ENCODE measurements at regions of chr18 and their contacts with region 1.

Region 1: DNA sequence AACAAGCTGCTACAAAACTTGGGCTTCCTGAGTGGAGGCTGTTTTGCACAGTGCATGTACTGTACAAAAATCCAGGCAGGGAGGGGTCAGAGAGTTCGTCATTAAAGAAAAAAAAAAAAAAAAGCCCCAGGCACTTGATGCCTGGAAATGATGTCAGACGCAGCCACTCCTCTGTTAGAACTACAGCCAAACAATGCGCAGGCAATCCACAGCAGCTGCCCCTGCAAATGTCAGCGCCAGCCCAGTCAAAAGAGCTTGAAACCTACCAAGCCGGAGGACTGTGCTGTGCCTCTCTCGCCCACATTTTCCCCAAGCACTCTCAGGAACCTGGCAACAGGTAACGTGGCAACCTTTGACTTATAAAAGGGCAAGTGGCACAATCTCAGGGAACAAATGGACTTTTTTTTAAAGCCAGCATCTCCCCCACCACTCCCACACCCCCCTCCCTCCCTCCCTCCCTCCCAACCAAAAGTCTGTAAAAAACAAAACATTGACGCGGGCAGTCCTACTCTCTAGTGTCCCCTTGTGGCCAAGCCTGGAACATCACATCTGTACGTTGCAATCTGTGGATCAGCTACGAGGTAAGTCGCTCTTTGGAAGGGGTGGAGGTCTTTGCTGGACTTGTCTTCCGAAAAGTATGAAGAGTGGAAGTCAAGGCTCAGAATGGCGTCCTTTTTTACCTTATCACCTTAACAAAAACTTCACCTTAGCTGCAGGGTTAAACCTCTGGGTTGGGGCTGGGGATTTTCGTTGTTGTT is 144.1 kb downstream of the TGIF1 start:
- DNase-seq: peak; percentile 67 to 97 (median 90)
- ATAC-seq: peak; percentile 86 to 87
- H3K4me3 Mint-ChIP-seq: peak overlapping the region; percentile 87 to 96 (median 92)
- H3K27ac Mint-ChIP-seq: peak overlapping the region; percentile 97 to 100 (median 100)
- H3K4me1 Mint-ChIP-seq: peaks cover 22 to 65% (median 53%) of the 10 kb centered on the region in 4 donors
- H3K27me3 Mint-ChIP-seq: no peaks in the 10 kb centered on the region

Region 2: GRCh38 chr18:3261371-3262246 is 332.5 kb before region 1 on chr18 and contains the start of gene MYL12B:
- POLR2A ChIA-PET with region 1: interaction called, 18 read pairs
- DNase-seq: peak; percentile 64 to 94 (median 77)
- ATAC-seq: peak; percentile 73 to 76
- H3K4me3 Mint-ChIP-seq: peak within 1 kb of the TSS; percentile 91 to 100 (median 98)
- H3K27ac Mint-ChIP-seq: peak within 1 kb of the TSS; percentile 97 to 100 (median 99)
- H3K4me1 Mint-ChIP-seq: peaks cover 40 to 89% (median 84%) of the 10 kb centered on the region in 4 donors
- H3K27me3 Mint-ChIP-seq: no peaks in the 10 kb centered on the region
- polyA plus RNA-seq, gene MYL12B: 828 to 956 (median 830) TPM

Region 3: GRCh38 chr18:3297025-3297984 is 296.8 kb before region 1 on chr18:
- POLR2A ChIA-PET with region 1: interaction called, 16 read pairs
- DNase-seq: peak; percentile 80 to 95 (median 90)
- ATAC-seq: peak; percentile 96 to 98
- H3K4me3 Mint-ChIP-seq: peak overlapping the region; percentile 92 to 98 (median 95)
- H3K27ac Mint-ChIP-seq: peak overlapping the region; percentile 82 to 95 (median 87)
- H3K4me1 Mint-ChIP-seq: peaks cover 4 to 17% (median 10%) of the 10 kb centered on the region in 4 donors
- H3K27me3 Mint-ChIP-seq: peaks cover 17 to 34% (median 19%) of the 10 kb centered on the region in 5 donors

Region 4: GRCh38 chr18:3441290-3441689 is 152.8 kb before region 1 on chr18:
- POLR2A ChIA-PET with region 1: interaction called, 12 read pairs
- DNase-seq: peak in 3 of 10 donors; percentile 17 to 64 (median 20)
- ATAC-seq: peak; percentile 62 to 85
- H3K4me3 Mint-ChIP-seq: no peak overlapping the region
- H3K27ac Mint-ChIP-seq: no peak overlapping the region
- H3K4me1 Mint-ChIP-seq: peaks cover 0 to 2% (median under 1%) of the 10 kb centered on the region in 4 donors
- H3K27me3 Mint-ChIP-seq: peaks cover 0 to 4% (median 0%) of the 10 kb centered on the region in 5 donors

Region 5: DNA sequence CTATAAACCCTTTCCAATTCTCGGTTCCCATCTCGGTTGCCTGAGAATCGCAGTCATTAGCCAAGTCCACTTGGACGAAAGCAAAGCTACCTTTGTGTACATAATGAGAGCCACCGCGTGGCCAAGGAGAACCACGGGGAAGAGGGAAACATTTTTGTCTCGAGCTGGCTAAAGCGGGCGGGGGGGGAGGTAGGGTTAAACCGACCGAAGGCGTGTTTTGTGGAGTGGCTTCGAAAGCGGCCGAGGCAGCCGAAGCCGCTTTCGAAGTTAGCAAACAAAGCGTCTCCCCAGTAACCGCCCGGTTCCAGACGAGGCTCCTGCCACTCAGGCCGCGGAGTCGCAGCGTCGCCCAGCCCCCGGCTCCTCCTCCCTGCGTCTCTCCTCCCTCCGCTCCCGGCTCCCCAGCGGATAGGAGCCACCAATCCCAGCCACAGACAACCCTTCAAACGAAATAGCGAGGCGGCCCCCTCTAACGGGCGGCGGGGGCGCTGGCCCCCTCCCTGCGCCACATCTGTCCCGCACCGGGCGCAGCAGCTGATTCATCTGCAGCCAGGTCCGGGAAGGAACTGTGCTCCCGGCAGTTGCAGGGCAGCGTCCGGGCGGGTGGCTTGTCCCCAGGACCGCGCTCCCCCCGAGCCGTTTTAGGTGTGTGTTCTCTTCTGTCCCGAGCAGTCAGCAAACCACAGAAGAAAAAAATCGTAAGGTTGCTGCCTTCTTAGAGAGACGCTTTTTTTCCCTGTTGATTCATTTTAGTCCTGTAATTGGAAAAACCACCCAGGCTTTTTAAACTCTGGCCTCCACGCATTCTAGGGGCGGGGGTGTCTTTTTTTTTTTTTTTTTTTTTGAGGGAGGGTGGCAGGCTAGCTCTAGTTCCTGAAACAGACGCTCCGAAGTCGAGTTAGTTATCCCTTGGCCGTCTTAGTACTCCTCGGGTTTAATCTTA is 145.9 kb before region 1 on chr18:
- POLR2A ChIA-PET with region 1: interaction called, 90 read pairs
- DNase-seq: peak; percentile 66 to 94 (median 85)
- ATAC-seq: peak; percentile 52 to 59
- H3K4me3 Mint-ChIP-seq: peak overlapping the region; percentile 88 to 99 (median 97)
- H3K27ac Mint-ChIP-seq: peak overlapping the region; percentile 98 to 100 (median 100)
- H3K4me1 Mint-ChIP-seq: peaks cover 13 to 38% (median 28%) of the 10 kb centered on the region in 4 donors
- H3K27me3 Mint-ChIP-seq: peaks cover 0 to 3% (median 0%) of the 10 kb centered on the region in 5 donors

Region 6: GRCh38 chr18:3604498-3605408 is 10.7 kb after region 1 on chr18:
- POLR2A ChIA-PET with region 1: interaction called, 42 read pairs
- DNase-seq: peak in 2 of 10 donors; percentile 34 to 53
- ATAC-seq: peak; percentile 63
- H3K4me3 Mint-ChIP-seq: no peak overlapping the region
- H3K27ac Mint-ChIP-seq: no peak overlapping the region
- H3K4me1 Mint-ChIP-seq: peaks cover 0 to 16% (median 9%) of the 10 kb centered on the region in 4 donors
- H3K27me3 Mint-ChIP-seq: peaks cover 0 to 5% (median 0%) of the 10 kb centered on the region in 5 donors

Region 7: GRCh38 chr18:3652380-3653262 is 58.5 kb after region 1 on chr18:
- POLR2A ChIA-PET with region 1: no interaction called
- DNase-seq: no peak
- ATAC-seq: no peak
- H3K4me3 Mint-ChIP-seq: no peak overlapping the region
- H3K27ac Mint-ChIP-seq: peak overlapping the region in 2 of 10 donors; percentile 7 to 44
- H3K4me1 Mint-ChIP-seq: peaks cover 1 to 7% (median 3%) of the 10 kb centered on the region in 4 donors
- H3K27me3 Mint-ChIP-seq: no peaks in the 10 kb centered on the region

Measured in naive thymus-derived CD8-positive, alpha-beta T cell (primary cell).